Gastrocnemius medialis (tissue), 4 donors: ENCODE measurements at regions of chr16 and their contacts with region 1.

Region 1: DNA sequence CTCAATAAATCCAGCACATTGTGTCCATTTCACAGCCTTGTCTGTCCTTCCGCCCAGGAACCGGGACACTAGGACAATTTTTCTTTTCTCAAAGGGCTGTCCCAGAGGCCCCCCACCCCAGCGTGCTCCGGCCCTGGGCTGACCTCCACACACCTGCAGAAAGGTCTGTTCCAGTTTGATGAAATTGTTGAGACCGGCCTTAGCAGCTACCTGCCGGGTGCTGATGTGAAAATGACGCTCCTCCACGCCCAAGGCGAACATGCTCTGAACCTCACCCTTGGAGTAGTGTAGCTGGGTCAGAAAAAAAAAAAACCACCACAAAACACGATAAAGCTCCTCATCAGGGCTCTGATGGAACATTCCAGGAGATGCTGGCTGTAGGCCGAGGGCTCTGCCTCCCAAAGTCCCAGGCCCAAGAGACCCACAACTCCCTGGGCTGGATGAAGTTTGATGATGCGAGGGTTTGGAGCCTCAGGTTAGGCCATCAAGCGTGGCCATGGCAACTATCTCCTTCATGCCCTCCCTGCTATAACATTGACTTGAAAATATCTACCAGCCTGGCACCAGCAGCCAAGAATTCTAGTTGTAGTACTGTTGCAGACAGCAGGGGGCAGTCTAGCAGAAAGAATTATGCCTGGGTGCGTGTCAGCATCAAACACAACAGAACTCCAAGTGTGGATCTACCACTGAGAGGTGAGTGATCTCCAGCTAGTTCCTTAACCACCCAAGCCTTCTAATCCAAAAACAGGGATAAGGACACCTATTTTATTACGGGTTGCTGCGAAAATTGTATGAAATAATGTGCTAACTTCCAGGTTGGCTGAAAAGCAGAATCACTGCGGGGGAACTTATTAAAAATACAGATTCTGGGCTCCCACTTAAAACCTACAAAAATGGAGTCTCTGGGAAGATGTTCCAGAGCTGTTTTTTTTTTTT is 62.1 kb downstream of the RMI2 start:
- DNase-seq: peak; percentile 19 to 49
- ATAC-seq: peak; percentile 57 to 65
- H3K4me3 ChIP-seq: no peak overlapping the region
- H3K27ac ChIP-seq: no peak overlapping the region
- H3K4me1 ChIP-seq: no peaks in the 10 kb centered on the region
- H3K27me3 ChIP-seq: no peaks in the 10 kb centered on the region
- CTCF ChIP-seq: peak; percentile 48 to 81 (median 68)
- POLR2A ChIP-seq: no peak

Region 2: GRCh38 chr16:11506741-11507305 is 99.5 kb after region 1 on chr16:
- in situ Hi-C with region 1: no loop called
- intact Hi-C with region 1: no loop called
- DNase-seq: no peak
- ATAC-seq: no peak
- H3K4me3 ChIP-seq: no peak overlapping the region
- H3K27ac ChIP-seq: no peak overlapping the region
- H3K4me1 ChIP-seq: no peaks in the 10 kb centered on the region
- H3K27me3 ChIP-seq: no peaks in the 10 kb centered on the region
- CTCF ChIP-seq: no peak
- POLR2A ChIP-seq: no peak

Region 3: DNA sequence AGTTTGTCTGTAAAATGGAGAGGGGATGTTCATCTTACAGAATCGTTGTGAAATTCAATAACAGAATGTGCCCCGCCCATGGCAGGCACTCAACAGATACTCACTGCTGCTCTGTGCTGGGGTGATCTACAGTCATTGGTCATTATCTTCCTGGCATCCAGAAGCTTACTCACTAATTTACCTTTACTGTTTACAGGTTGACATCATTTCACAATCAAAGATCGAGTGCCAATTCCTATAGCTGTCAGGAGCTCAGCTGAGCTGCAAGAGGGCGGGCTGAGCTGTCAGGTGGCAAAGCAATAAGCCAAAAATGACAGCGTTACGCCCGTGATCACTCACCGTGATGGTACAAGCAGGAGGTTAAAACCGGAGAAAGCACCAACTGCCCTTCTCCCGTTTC is 128.2 kb after region 1 on chr16:
- in situ Hi-C with region 1: no loop called
- intact Hi-C with region 1: loop called (anchors 2 kb)
- DNase-seq: no peak
- ATAC-seq: no peak
- H3K4me3 ChIP-seq: no peak overlapping the region
- H3K27ac ChIP-seq: no peak overlapping the region
- H3K4me1 ChIP-seq: no peaks in the 10 kb centered on the region
- H3K27me3 ChIP-seq: no peaks in the 10 kb centered on the region
- CTCF ChIP-seq: no peak
- POLR2A ChIP-seq: no peak

Region 4: DNA sequence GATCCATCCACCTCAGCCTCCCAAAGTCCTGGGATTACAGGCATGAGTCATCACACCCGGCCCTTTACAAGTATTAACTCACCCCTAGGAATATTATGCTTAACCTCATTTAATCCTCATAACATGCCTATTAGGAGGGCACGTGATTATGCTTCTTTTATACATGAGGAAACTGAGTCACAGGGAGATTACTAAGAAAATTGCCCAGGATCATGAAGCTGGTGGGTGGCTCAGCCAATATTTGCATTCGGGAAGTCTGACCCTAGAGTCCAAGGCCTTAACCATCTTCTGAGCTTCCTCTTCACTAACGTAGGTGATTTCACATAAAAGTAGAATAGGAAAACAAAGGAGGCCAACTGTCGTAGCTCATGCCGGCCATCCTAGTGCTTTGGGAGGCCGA is 242.0 kb after region 1 on chr16:
- in situ Hi-C with region 1: loop called in 1 of 4 experiments (anchors 5 kb)
- intact Hi-C with region 1: no loop called
- DNase-seq: no peak
- ATAC-seq: no peak
- H3K4me3 ChIP-seq: no peak overlapping the region
- H3K27ac ChIP-seq: no peak overlapping the region
- H3K4me1 ChIP-seq: no peaks in the 10 kb centered on the region
- H3K27me3 ChIP-seq: no peaks in the 10 kb centered on the region
- CTCF ChIP-seq: no peak
- POLR2A ChIP-seq: no peak

Region 5: GRCh38 chr16:11806721-11807120 is 399.4 kb after region 1 on chr16:
- in situ Hi-C with region 1: no loop called
- intact Hi-C with region 1: loop called (anchors 5 kb)
- DNase-seq: no peak
- ATAC-seq: no peak
- H3K4me3 ChIP-seq: no peak overlapping the region
- H3K27ac ChIP-seq: no peak overlapping the region
- H3K4me1 ChIP-seq: no peaks in the 10 kb centered on the region
- H3K27me3 ChIP-seq: no peaks in the 10 kb centered on the region
- CTCF ChIP-seq: no peak
- POLR2A ChIP-seq: no peak